Right lobe of liver (tissue), 6 donors: ENCODE measurements at regions of chr1 and their contacts with region 1.

Region 1: GRCh38 chr1:183227963-183228649 is 42.0 kb downstream of the LAMC2 start:
- DNase-seq: peak in 2 of 3 donors; percentile 40 to 59
- ATAC-seq: peak; percentile 84 to 94 (median 88)
- H3K4me3 ChIP-seq: no peak overlapping the region
- H3K27ac ChIP-seq: no peak overlapping the region
- H3K4me1 ChIP-seq: peaks cover 0 to 5% (median 0%) of the 10 kb centered on the region in 4 donors
- H3K27me3 ChIP-seq: no peaks in the 10 kb centered on the region
- CTCF ChIP-seq: peak; percentile 70 to 73 (median 72)
- POLR2A ChIP-seq: no peak

Region 2: DNA sequence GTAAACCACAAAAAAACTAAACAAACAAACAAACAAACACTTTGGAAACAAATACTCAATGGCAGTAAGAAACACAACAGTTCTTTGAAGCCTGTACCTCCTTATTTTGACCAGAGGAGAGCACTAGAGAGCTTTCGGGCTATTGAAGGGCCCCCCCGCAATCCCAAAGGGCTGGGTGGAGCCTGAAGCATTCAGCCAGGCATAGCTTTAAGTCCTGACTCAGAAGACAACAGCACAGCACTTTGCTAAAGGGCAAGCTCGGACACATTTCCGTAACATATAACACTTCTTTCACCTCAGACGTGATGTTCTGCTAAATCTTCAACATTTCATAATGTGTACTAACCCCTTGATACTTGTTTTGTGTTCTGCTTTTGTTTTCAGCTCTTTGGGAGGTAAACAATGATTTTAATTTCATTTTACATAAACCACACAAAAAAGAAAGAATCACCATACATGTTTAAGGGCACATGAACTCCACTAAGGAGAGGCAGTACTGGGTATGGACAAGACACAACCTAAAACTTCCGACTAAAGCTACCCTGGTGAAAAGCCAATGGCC is 265.5 kb before region 1 on chr1:
- intact Hi-C with region 1: loop called in 1 of 2 experiments (anchors 10 kb)
- DNase-seq: peak in 2 of 3 donors; percentile 68 to 74
- ATAC-seq: peak; percentile 100
- H3K4me3 ChIP-seq: peak overlapping the region in 1 of 3 donors; percentile 29
- H3K27ac ChIP-seq: peak overlapping the region in 1 of 3 donors; percentile 43
- H3K4me1 ChIP-seq: no peaks in the 10 kb centered on the region
- H3K27me3 ChIP-seq: no peaks in the 10 kb centered on the region
- CTCF ChIP-seq: peak; percentile 88 to 94 (median 91)
- POLR2A ChIP-seq: no peak

Region 3: DNA sequence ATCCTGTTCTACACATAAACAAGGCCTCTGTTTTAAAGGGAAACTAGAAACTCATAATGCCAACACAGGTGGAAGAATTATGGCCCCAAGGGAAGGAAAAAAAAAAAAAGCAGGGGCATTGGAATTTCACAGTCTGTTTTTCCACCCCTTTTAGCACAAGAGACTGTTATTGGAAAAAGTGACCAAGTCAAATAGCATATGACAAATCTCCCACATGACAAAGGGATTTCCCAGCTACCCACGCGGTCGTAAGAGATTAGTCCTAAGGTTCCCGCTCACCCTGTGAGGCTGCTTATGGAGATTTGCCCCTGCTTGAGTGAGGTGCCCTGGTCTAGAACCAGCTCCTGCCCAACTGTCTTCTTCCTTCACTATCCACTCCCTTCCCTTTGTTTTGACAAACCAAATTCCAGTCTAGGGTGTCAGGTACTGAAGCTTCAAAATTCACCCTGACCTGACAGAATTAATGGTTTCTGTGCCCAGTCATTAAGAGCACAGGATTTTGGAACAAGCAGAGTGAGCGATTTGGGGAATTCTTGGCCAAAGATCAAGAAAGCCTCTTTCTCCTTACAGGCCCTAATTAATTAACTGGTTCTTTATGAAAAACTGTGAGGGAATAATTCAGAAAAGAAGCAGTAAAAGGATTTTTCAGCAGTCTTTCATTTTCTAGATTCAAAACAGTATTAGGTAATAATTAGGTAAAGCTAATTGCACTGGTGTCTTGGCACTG is 82.8 kb after region 1 on chr1:
- intact Hi-C with region 1: no loop called
- DNase-seq: no peak
- ATAC-seq: no peak
- H3K4me3 ChIP-seq: no peak overlapping the region
- H3K27ac ChIP-seq: no peak overlapping the region
- H3K4me1 ChIP-seq: no peaks in the 10 kb centered on the region
- H3K27me3 ChIP-seq: no peaks in the 10 kb centered on the region
- CTCF ChIP-seq: no peak
- POLR2A ChIP-seq: no peak